ENCODE measurements at regions of chr17 and their contacts with region 1.

Region 1: DNA sequence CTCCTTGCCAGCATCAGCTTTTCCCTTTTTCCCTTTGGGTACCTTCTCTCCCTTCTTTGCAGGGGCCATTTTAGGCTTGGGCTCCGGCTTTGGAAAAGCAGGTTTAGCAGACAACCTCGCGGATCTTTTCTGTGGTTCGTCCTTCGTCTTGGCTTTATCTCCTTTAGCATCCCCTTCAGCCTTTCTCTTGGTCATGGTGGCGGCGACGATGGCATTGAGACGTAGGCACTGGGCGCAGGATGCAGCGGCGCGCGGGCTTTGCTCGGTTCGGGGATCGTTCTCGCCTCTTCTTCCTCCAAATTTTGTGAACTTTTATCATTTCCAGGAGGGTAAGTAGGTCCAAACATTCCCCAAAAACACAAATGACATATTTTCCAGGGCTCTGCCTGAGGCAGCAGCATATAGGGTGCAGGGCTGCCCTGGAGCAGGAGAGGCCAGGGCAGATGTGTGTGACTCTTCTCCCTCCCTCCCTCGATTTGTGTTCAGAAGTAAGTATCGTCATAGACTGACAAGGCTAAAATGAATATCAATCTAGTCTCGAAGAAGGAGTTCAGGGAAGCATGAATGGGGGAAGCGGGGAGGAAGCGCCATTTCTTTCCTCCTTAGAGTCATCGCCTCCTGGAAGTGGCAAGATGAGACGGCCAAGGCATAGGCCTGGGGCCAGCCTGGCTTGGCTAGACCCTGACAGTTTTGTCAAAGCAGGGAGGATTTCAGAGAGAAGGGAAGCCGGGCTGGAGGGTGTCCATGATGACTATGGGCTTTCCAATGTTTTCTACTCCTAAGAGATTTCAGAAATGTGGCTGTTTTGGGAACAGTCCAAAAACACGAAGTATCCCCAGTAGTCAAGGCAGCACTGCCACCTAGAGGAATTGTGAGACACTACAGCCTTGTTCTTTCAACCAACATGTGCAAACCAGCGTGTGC is 13.2 kb downstream of the CHCT1 start:
- DNase-seq: peak; percentile 60 to 79 (median 67)
- ATAC-seq: peak; percentile 79 to 87 (median 81)
- H3K4me3 ChIP-seq: peak overlapping the region in 2 of 12 donors; percentile 6 to 38
- H3K27ac ChIP-seq: peak overlapping the region in 2 of 12 donors; percentile 20 to 40
- H3K4me1 ChIP-seq: peaks cover 0 to 12% (median 1%) of the 10 kb centered on the region in 12 donors
- H3K27me3 ChIP-seq: no peaks in the 10 kb centered on the region
- CTCF ChIP-seq: peak; percentile 83 to 98 (median 92)
- POLR2A ChIP-seq: no peak

Region 2: DNA sequence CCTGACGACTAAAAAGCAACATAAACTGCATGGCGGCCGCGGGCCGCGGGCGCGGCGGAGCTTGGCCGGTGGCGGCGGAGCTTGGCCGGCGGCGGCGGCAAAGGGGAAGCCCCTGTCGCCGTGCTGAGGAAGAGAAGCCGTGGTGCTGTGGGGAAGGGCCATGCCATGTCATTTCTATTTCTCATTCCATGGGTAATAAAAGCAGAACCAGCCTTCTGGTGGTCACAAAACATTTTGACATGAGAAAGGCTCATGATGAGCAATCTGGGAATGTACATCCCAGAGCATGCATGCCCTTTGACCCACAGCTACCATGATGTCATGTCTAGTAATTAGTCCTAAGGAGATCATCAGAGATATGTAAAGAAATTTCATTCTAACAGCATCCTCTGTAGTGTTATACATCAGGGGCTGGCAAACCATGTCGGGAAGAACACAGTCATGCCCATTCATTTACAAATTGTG is 332.8 kb before region 1 on chr17:
- intact Hi-C with region 1: loop called in 9 of 10 experiments (anchors 5 to 10 kb)
- DNase-seq: peak in 3 of 5 donors; percentile 24 to 45 (median 32)
- ATAC-seq: peak in 3 of 4 donors; percentile 57 to 77 (median 60)
- H3K4me3 ChIP-seq: peak overlapping the region in 10 of 12 donors; percentile 16 to 50 (median 40)
- H3K27ac ChIP-seq: peak overlapping the region in 5 of 12 donors; percentile 17 to 71 (median 20)
- H3K4me1 ChIP-seq: peaks cover 0 to 9% (median 0%) of the 10 kb centered on the region in 12 donors
- H3K27me3 ChIP-seq: no peaks in the 10 kb centered on the region
- CTCF ChIP-seq: no peak
- POLR2A ChIP-seq: no peak

Region 3: GRCh38 chr17:60135151-60135950 is 300.2 kb before region 1 on chr17:
- intact Hi-C with region 1: loop called in 4 of 10 experiments (anchors 5 to 10 kb)
- DNase-seq: peak; percentile 88 to 93 (median 91)
- ATAC-seq: peak; percentile 95 to 98 (median 96)
- H3K4me3 ChIP-seq: peak overlapping the region; percentile 47 to 99 (median 71)
- H3K27ac ChIP-seq: peak overlapping the region; percentile 62 to 97 (median 88)
- H3K4me1 ChIP-seq: peaks cover 0 to 45% (median 20%) of the 10 kb centered on the region in 12 donors
- H3K27me3 ChIP-seq: peaks cover 9 to 31% (median 22%) of the 10 kb centered on the region in 9 donors
- CTCF ChIP-seq: no peak
- POLR2A ChIP-seq: peak in 1 of 2 donors; percentile 69

Region 4: DNA sequence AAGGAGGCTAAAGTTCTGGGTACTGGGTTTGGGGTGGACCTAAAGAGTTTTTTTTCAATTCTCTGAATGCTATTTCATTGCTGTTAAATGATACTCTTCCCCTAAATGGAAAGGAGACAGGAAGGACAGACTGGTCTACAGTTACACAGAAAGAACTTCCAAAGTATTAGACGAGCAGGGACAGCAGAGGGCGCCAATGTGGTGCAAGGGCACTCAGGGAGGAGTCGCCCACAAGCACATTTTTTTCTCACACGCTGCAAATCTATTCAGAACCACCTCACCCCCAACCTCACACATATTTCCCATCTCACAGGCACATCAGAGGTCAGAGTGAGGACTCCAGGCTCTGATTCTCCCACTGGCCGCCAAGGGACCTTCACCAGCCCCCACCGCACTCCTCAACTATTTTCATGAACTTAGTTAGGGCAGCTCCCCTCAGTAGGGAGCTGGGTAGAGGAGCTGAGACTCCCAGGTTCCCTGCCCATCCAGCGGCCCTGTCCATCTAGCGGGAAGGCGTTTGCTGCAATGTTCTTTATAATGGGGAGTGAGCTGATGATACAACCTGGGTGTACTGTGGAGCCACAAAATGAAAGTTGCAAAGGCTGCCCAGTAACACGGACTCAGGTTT is 292.5 kb before region 1 on chr17:
- intact Hi-C with region 1: loop called in 4 of 10 experiments (anchors 5 to 10 kb)
- DNase-seq: peak; percentile 80 to 87 (median 86)
- ATAC-seq: peak; percentile 58 to 87 (median 76)
- H3K4me3 ChIP-seq: peak overlapping the region in 5 of 12 donors; percentile 3 to 35 (median 15)
- H3K27ac ChIP-seq: peak overlapping the region in 8 of 12 donors; percentile 22 to 63 (median 49)
- H3K4me1 ChIP-seq: peaks cover 4 to 49% (median 34%) of the 10 kb centered on the region in 12 donors
- H3K27me3 ChIP-seq: peaks cover 23 to 72% (median 62%) of the 10 kb centered on the region in 9 donors
- CTCF ChIP-seq: peak; percentile 59 to 83 (median 72)
- POLR2A ChIP-seq: no peak

Region 5: DNA sequence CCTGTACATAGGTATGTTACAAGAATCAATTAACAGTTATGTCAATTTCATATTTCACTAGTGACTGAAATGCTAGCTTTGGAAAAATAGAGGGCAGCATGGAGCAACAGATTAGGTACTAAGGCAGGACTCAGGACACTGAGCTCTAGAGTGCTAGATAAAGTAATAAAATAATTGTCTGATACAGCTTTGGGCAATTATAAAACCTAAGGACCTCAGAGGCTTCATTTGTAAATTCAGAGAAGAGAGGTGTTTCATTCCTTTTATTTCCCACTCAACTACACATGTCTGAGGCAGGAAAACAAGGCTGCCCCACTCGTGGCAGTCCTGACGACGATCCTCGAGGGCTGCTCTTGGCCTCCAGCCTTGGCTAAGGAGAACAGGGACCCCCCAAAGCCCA is 204.3 kb before region 1 on chr17:
- intact Hi-C with region 1: loop called in 7 of 10 experiments (anchors 1 to 10 kb)
- DNase-seq: no peak
- ATAC-seq: no peak
- H3K4me3 ChIP-seq: no peak overlapping the region
- H3K27ac ChIP-seq: no peak overlapping the region
- H3K4me1 ChIP-seq: peaks cover 0 to 2% (median 0%) of the 10 kb centered on the region in 12 donors
- H3K27me3 ChIP-seq: no peaks in the 10 kb centered on the region
- CTCF ChIP-seq: peak in 10 of 12 donors; percentile 23 to 54 (median 38)
- POLR2A ChIP-seq: no peak

Region 6: GRCh38 chr17:60599620-60600489 is 164.3 kb after region 1 on chr17 and contains the start of gene PPM1D:
- intact Hi-C with region 1: no loop called
- DNase-seq: peak; percentile 100
- ATAC-seq: peak; percentile 97 to 98 (median 97)
- H3K4me3 ChIP-seq: peak within 1 kb of the TSS; percentile 67 to 98 (median 92)
- H3K27ac ChIP-seq: peak within 1 kb of the TSS; percentile 89 to 100 (median 97)
- H3K4me1 ChIP-seq: peaks cover 0 to 50% (median 18%) of the 10 kb centered on the region in 12 donors
- H3K27me3 ChIP-seq: no peaks in the 10 kb centered on the region
- CTCF ChIP-seq: no peak
- POLR2A ChIP-seq: peak; percentile 21 to 96
- total RNA-seq, gene PPM1D: 6.2 to 11.4 (median 7.7) TPM

Region 7: GRCh38 chr17:60630352-60630751 is 194.8 kb after region 1 on chr17:
- intact Hi-C with region 1: loop called in 1 of 10 experiments (anchors 10 kb)
- DNase-seq: peak in 3 of 5 donors; percentile 29 to 51 (median 41)
- ATAC-seq: no peak
- H3K4me3 ChIP-seq: no peak overlapping the region
- H3K27ac ChIP-seq: peak overlapping the region in 3 of 12 donors; percentile 4 to 48 (median 4)
- H3K4me1 ChIP-seq: peaks cover 0 to 13% (median 2%) of the 10 kb centered on the region in 12 donors
- H3K27me3 ChIP-seq: no peaks in the 10 kb centered on the region
- CTCF ChIP-seq: no peak
- POLR2A ChIP-seq: no peak

Measured in heart left ventricle (tissue), 16 donors.